ENCODE measurements at regions of chr1 and their contacts with region 1.

Region 1: GRCh38 chr1:69551476-69552324 is 16.0 kb upstream of the LRRC7 start:
- DNase-seq: no peak
- H3K4me3 ChIP-seq: no peak overlapping the region
- H3K27ac ChIP-seq: no peak overlapping the region
- H3K4me1 ChIP-seq: no peaks in the 10 kb centered on the region
- H3K27me3 ChIP-seq: no peaks in the 10 kb centered on the region
- CTCF ChIP-seq: no peak
- POLR2A ChIP-seq: no peak

Region 2: DNA sequence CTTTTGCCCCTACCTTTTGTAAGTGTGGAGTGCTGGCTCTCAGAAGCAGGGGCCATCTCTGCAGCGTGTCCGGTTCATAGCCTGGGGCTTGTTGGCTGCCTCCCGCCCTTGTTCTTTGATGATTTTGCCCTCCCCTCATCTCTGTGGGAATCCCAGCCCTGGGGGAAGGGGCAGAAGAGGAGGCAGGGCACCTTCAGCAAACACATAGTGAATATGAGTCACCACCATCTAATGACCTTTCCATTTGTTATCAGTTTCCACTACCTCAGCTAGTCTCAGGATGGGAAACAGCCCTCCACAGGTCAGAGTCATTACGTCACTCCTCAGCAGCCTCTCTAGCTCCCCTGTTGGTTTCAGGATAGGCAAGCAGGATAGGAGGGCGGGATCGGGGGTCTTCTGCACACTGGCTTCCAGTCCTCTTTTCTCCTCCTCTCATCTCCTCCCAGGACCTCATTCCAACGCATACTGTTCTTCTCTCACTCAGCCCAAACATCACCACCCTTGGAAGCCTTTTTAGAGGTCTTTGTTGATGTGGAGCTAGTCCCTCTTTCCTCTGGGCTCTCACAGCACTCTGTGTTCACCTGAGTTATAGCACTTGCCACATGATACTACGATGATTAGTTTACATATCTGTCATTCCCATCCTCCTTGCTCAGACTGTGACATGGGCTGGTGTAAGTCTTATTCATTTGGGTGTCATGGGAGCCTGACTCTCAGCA is 1850.8 kb before region 1 on chr1:
- intact Hi-C with region 1: no loop called
- DNase-seq: no peak
- H3K4me3 ChIP-seq: no peak overlapping the region
- H3K27ac ChIP-seq: no peak overlapping the region
- H3K4me1 ChIP-seq: no peaks in the 10 kb centered on the region
- H3K27me3 ChIP-seq: no peaks in the 10 kb centered on the region
- CTCF ChIP-seq: no peak
- POLR2A ChIP-seq: no peak

Region 3: GRCh38 chr1:68751723-68752122 is 800.0 kb before region 1 on chr1:
- intact Hi-C with region 1: no loop called
- DNase-seq: no peak
- H3K4me3 ChIP-seq: no peak overlapping the region
- H3K27ac ChIP-seq: no peak overlapping the region
- H3K4me1 ChIP-seq: no peaks in the 10 kb centered on the region
- H3K27me3 ChIP-seq: no peaks in the 10 kb centered on the region
- CTCF ChIP-seq: no peak
- POLR2A ChIP-seq: no peak

Region 4: GRCh38 chr1:68826836-68827235 is 724.9 kb before region 1 on chr1:
- intact Hi-C with region 1: loop called (anchors 5 kb)
- DNase-seq: no peak
- H3K4me3 ChIP-seq: no peak overlapping the region
- H3K27ac ChIP-seq: no peak overlapping the region
- H3K4me1 ChIP-seq: no peaks in the 10 kb centered on the region
- H3K27me3 ChIP-seq: no peaks in the 10 kb centered on the region
- CTCF ChIP-seq: no peak
- POLR2A ChIP-seq: no peak

Region 5: GRCh38 chr1:69567652-69568420 is 16.1 kb after region 1 on chr1 and contains the start of gene LRRC7:
- intact Hi-C with region 1: no loop called
- DNase-seq: no peak
- H3K4me3 ChIP-seq: peak within 1 kb of the TSS; percentile 42 to 64 (median 50)
- H3K27ac ChIP-seq: no peak within 1 kb of the TSS
- H3K4me1 ChIP-seq: no peaks in the 10 kb centered on the region
- H3K27me3 ChIP-seq: peaks cover 0 to 17% of the 10 kb centered on the region in 2 donors
- CTCF ChIP-seq: no peak
- POLR2A ChIP-seq: no peak
- total RNA-seq, gene LRRC7: not detected